ENCODE measurements at regions of chr12 and their contacts with region 1.

Region 1: GRCh38 chr12:53402871-53403270 is 20.8 kb upstream of the AMHR2 start:
- DNase-seq: no peak
- ATAC-seq: no peak
- H3K4me3 ChIP-seq: no peak overlapping the region
- H3K4me3 Mint-ChIP-seq: no peak overlapping the region
- H3K27ac ChIP-seq: no peak overlapping the region
- H3K27ac Mint-ChIP-seq: no peak overlapping the region
- H3K4me1 ChIP-seq: no peaks in the 10 kb centered on the region
- H3K4me1 Mint-ChIP-seq: peaks cover 4 to 17% (median 10%) of the 10 kb centered on the region in 7 donors
- H3K27me3 ChIP-seq: no peaks in the 10 kb centered on the region
- H3K27me3 Mint-ChIP-seq: no peaks in the 10 kb centered on the region

Region 2: GRCh38 chr12:53418221-53418620 is 15.3 kb after region 1 on chr12:
- CTCF ChIA-PET with region 1: no interaction called
- POLR2A ChIA-PET with region 1: interaction called, 3 read pairs
- intact Hi-C with region 1: loop called in 1 of 2 experiments (anchors 2 kb)
- DNase-seq: no peak
- ATAC-seq: no peak
- H3K4me3 ChIP-seq: no peak overlapping the region
- H3K4me3 Mint-ChIP-seq: peak overlapping the region in 2 of 10 donors; percentile 14 to 55
- H3K27ac ChIP-seq: no peak overlapping the region
- H3K27ac Mint-ChIP-seq: peak overlapping the region in 6 of 9 donors; percentile 23 to 72 (median 30)
- H3K4me1 ChIP-seq: peaks cover 4 to 7% of the 10 kb centered on the region in 2 donors
- H3K4me1 Mint-ChIP-seq: peaks cover 16 to 64% (median 54%) of the 10 kb centered on the region in 7 donors
- H3K27me3 ChIP-seq: no peaks in the 10 kb centered on the region
- H3K27me3 Mint-ChIP-seq: no peaks in the 10 kb centered on the region